Head of caudate nucleus (tissue), 42 donors: ENCODE measurements at regions of chr7 and their contacts with region 1.

Region 1: DNA sequence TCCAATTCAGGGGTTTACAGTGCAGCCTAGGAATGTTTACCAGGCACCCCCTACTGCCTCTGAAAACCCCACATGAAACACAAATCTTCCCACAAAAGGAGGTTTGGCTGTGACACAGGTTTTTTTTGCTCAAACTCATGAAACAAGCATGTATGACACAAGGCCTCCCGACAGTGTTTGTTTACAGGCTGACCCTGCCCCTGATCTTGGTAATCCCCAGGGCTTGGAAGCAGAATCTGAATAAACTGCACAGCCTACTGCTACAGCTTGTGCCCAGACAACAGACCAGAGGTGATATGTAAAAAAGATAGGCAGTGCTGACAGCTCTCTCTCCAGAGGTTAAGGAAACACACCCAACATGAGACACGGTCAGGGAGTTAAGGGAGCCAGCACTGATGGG is 184.2 kb downstream of the KMT2E start:
- DNase-seq: no peak

Region 2: DNA sequence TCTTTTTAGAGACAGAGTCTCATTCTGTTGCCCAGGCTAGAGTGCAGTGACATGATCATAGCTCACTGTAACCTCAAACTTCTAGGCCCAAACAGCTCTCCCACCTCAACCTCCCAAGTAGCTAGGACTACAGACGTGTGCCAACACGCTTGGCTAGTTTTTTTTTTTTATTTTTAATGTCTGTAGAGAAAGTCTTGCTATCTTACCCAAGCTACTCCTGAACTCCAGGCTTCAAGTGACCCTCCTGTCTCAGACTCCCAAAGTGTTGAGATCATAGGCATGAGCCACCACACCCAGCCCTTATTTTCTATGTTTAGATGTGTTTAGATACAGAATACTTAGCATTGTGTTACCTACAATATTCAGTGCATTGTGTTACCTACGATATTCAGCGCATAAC is 137.8 kb before region 1 on chr7:
- intact Hi-C with region 1: no loop called
- DNase-seq: no peak

Region 3: GRCh38 chr7:105228555-105228954 is 30.3 kb after region 1 on chr7:
- intact Hi-C with region 1: no loop called
- DNase-seq: peak in 1 of 42 donors; percentile 35

Region 4: GRCh38 chr7:105268511-105269392 is 70.5 kb after region 1 on chr7:
- intact Hi-C with region 1: loop called (anchors 10 kb)
- DNase-seq: peak in 14 of 42 donors; percentile 27 to 68 (median 46)

Region 5: DNA sequence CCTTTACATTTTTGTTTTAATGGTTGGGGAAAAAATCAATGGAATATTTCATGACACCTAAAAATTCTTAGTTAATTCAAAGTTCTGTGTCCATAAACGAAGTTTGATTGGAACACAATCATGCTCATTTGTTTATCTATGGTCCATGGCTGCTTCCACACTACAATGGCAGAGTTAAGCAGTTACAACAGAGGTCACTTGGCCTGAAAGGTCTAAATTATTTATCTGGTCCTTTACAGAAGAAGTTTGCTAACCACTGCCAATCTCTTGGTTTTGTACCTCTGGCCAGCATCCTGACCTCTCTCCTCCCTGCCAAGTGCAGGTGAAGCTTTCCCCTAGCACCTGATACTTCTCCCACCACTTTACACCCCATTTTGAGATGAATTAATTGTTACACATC is 129.0 kb after region 1 on chr7:
- intact Hi-C with region 1: no loop called
- DNase-seq: no peak